ENCODE measurements at regions of chr18 and their contacts with region 1.

Region 1: GRCh38 chr18:48800876-48801727 is 149.7 kb downstream of the SMAD7 start:
- DNase-seq: peak; percentile 89
- ATAC-seq: peak; percentile 87
- H3K4me3 ChIP-seq: peak overlapping the region; percentile 36; the same call in 1 of the 2 replicates
- H3K27ac ChIP-seq: peak overlapping the region; percentile 92
- H3K4me1 ChIP-seq: peaks cover 52% of the 10 kb centered on the region
- H3K27me3 ChIP-seq: no peaks in the 10 kb centered on the region
- CTCF ChIP-seq: no peak
- EP300 ChIP-seq: peak; percentile 87 to 93
- POLR2A ChIP-seq: peak; percentile 60; the same call in 1 of the 2 replicates
- RAD21 ChIP-seq: no peak

Region 2: DNA sequence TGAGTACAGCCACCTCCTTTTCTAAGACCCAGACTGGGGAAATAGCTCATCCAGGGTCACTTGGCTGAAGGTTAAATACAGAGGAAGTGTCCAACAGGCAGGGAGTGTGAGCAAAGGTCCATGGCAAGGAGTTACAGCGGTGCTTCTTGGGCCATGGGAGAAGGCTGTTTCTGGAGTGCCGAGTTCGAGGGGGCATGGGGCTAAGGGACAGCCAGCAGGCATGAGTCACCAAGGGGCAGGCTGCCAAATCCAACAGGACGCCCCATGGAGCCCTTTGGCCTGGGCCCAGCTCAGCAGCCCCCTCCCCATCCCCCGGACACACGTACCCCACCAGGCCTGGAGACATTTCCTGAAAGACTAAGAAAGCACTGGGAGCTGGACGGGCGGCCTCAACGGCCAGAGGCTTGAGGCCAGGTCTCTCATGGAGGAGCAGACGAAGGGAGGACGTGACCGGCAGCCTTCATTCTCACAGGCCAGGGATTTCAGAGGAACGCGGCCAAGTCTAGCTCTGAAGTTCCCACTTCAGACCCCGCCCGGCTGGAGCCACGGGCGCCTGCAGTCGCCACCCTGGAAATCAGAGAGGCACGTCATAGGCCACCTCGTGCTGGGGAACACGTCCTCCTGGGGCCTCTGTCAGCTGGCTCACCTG is 10.8 kb before region 1 on chr18:
- CTCF ChIA-PET with region 1: interaction called, 11 read pairs
- POLR2A ChIA-PET with region 1: interaction called, 30 read pairs
- RAD21 ChIA-PET with region 1: interaction called, 86 read pairs
- SMC1A ChIA-PET with region 1: interaction called, 38 read pairs
- in situ Hi-C with region 1: no loop called
- intact Hi-C with region 1: loop called (anchors 1 kb)
- DNase-seq: no peak
- ATAC-seq: no peak
- H3K4me3 ChIP-seq: no peak overlapping the region
- H3K27ac ChIP-seq: peak overlapping the region; percentile 38; the same call in 1 of the 2 replicates
- H3K4me1 ChIP-seq: peaks cover 29% of the 10 kb centered on the region
- H3K27me3 ChIP-seq: no peaks in the 10 kb centered on the region
- CTCF ChIP-seq: no peak
- EP300 ChIP-seq: no peak
- POLR2A ChIP-seq: no peak
- RAD21 ChIP-seq: no peak

Region 3: GRCh38 chr18:48813833-48814489 is 12.9 kb after region 1 on chr18:
- CTCF ChIA-PET with region 1: interaction called, 6 read pairs
- POLR2A ChIA-PET with region 1: interaction called, 31 read pairs
- RAD21 ChIA-PET with region 1: interaction called, 61 read pairs
- SMC1A ChIA-PET with region 1: interaction called, 64 read pairs
- in situ Hi-C with region 1: no loop called
- intact Hi-C with region 1: no loop called
- DNase-seq: no peak
- ATAC-seq: peak; percentile 70
- H3K4me3 ChIP-seq: no peak overlapping the region
- H3K27ac ChIP-seq: peak overlapping the region; percentile 81
- H3K4me1 ChIP-seq: peaks cover 33% of the 10 kb centered on the region
- H3K27me3 ChIP-seq: no peaks in the 10 kb centered on the region
- CTCF ChIP-seq: no peak
- EP300 ChIP-seq: no peak
- POLR2A ChIP-seq: no peak
- RAD21 ChIP-seq: no peak